ENCODE measurements at regions of chr17 and their contacts with region 1.

Region 1: GRCh38 chr17:48024937-48025906 is 12.4 kb downstream of the COPZ2 start:
- DNase-seq: peak; percentile 96
- ATAC-seq: peak; percentile 92
- H3K4me3 ChIP-seq: peak overlapping the region; percentile 43
- H3K27ac ChIP-seq: peak overlapping the region; percentile 14; the same call in 1 of the 2 replicates
- H3K4me1 ChIP-seq: peaks cover 18% of the 10 kb centered on the region
- H3K27me3 ChIP-seq: no peaks in the 10 kb centered on the region
- CTCF ChIP-seq: peak; percentile 93
- POLR2A ChIP-seq: no peak
- RAD21 ChIP-seq: peak; percentile 90

Region 2: GRCh38 chr17:47905221-47905781 is 119.9 kb before region 1 on chr17:
- CTCF ChIA-PET with region 1: no interaction called
- POLR2A ChIA-PET with region 1: no interaction called
- dilution Hi-C with region 1: no loop called
- in situ Hi-C with region 1: no loop called
- intact Hi-C with region 1: no loop called
- DNase-seq: peak; percentile 78
- ATAC-seq: peak; percentile 92
- H3K4me3 ChIP-seq: no peak overlapping the region
- H3K27ac ChIP-seq: peak overlapping the region; percentile 12; the same call in 1 of the 2 replicates
- H3K4me1 ChIP-seq: peaks cover 10% of the 10 kb centered on the region
- H3K27me3 ChIP-seq: no peaks in the 10 kb centered on the region
- CTCF ChIP-seq: no peak
- POLR2A ChIP-seq: no peak
- RAD21 ChIP-seq: no peak

Region 3: GRCh38 chr17:47957591-47958428 is 67.4 kb before region 1 on chr17 and contains the start of gene PRR15L:
- CTCF ChIA-PET with region 1: no interaction called
- POLR2A ChIA-PET with region 1: no interaction called
- dilution Hi-C with region 1: no loop called
- in situ Hi-C with region 1: no loop called
- intact Hi-C with region 1: no loop called
- DNase-seq: no peak
- ATAC-seq: peak; percentile 21; the same call in 1 of the 2 replicates
- H3K4me3 ChIP-seq: no peak within 1 kb of the TSS
- H3K27ac ChIP-seq: no peak within 1 kb of the TSS
- H3K4me1 ChIP-seq: peaks cover 5% of the 10 kb centered on the region; the same call in 1 of the 2 replicates
- H3K27me3 ChIP-seq: peaks cover 8% of the 10 kb centered on the region
- CTCF ChIP-seq: no peak
- POLR2A ChIP-seq: no peak
- RAD21 ChIP-seq: no peak
- total RNA-seq, gene PRR15L: not detected in 2 replicates

Region 4: DNA sequence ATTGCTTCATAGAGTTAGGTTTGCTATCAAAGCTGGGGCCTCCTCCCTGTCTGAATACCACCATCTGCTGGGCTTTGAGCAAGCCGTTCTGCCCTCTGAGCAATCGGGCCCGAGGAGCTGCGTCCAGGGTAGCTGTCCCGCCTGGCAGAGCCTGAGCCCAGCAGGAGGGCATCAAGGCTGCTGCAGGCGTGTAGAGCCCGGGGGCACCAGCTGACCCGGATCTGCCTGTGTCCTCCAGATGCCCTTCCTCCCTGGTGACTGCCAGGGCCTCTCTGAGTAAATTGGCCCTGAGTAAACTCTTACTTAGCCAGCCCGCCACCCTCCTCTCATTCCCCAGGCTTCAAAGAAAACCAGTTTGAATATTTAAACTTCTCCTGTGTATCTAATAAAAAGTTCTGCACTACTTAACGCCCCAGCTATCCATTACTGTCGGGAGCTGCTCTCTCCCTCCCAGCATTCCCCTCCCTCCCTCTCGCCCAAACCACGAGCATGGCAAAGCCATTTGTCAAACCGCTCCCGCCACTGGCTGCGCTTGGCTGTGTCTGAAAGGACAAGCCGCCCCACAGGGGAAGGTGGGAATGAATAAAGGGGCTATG is 37.9 kb before region 1 on chr17:
- CTCF ChIA-PET with region 1: no interaction called
- POLR2A ChIA-PET with region 1: no interaction called
- dilution Hi-C with region 1: no loop called
- in situ Hi-C with region 1: no loop called
- intact Hi-C with region 1: no loop called
- DNase-seq: no peak
- ATAC-seq: peak; percentile 47
- H3K4me3 ChIP-seq: no peak overlapping the region
- H3K27ac ChIP-seq: no peak overlapping the region
- H3K4me1 ChIP-seq: peaks cover 9% of the 10 kb centered on the region
- H3K27me3 ChIP-seq: no peaks in the 10 kb centered on the region
- CTCF ChIP-seq: no peak
- POLR2A ChIP-seq: no peak
- RAD21 ChIP-seq: no peak

Region 5: GRCh38 chr17:48037036-48037837 is 12.0 kb after region 1 on chr17 and contains the start of gene COPZ2:
- CTCF ChIA-PET with region 1: interaction called, 12 read pairs
- POLR2A ChIA-PET with region 1: no interaction called
- dilution Hi-C with region 1: no loop called
- in situ Hi-C with region 1: no loop called
- intact Hi-C with region 1: no loop called
- DNase-seq: peak; percentile 44
- ATAC-seq: peak; percentile 90
- H3K4me3 ChIP-seq: peak within 1 kb of the TSS; percentile 65
- H3K27ac ChIP-seq: peak within 1 kb of the TSS; percentile 66
- H3K4me1 ChIP-seq: peaks cover 10% of the 10 kb centered on the region
- H3K27me3 ChIP-seq: no peaks in the 10 kb centered on the region
- CTCF ChIP-seq: peak; percentile 58
- POLR2A ChIP-seq: no peak
- RAD21 ChIP-seq: peak; percentile 38
- total RNA-seq, gene COPZ2: 41.0 and 60.5 TPM in 2 replicates

Region 6: DNA sequence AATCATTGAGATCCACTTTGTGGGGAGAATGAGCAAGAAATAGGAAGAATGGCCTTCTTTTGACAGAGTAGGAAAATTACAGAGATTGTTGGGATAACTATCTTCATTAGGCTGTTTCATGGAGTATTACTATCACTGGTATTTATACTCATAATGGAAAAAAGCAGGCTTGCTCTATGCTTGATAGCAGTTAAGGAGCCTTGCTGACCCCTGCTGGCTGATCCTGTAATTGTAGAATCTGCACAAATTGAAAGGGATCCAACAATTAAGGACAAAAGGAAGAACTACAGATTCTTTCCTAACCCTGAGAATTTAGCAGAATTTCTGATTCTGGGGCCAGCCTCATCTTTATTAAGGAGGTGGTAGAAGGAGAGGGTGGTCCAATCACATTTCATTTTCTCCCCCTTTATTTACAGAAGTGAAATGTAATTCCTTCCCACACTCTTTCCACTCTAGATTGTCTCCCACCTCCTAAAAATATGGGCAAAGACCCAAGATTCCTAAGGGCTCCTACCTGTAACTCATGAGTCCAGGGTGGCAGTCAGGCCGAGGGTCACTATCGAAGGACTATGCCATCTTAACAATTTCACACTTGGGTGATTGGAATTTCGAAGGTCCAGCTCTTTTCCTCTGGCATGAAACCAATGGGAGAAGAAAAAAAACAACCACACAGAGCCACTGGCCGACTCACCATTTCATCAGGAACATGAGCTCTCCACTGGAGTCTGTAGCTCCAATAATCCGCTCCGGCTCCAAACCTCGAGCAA is 49.3 kb after region 1 on chr17:
- CTCF ChIA-PET with region 1: interaction called, 9 read pairs
- POLR2A ChIA-PET with region 1: interaction called, 7 read pairs
- dilution Hi-C with region 1: no loop called
- in situ Hi-C with region 1: loop called (anchors 5 kb)
- intact Hi-C with region 1: loop called (anchors 1 kb)
- DNase-seq: peak; percentile 82
- ATAC-seq: peak; percentile 95
- H3K4me3 ChIP-seq: no peak overlapping the region
- H3K27ac ChIP-seq: no peak overlapping the region
- H3K4me1 ChIP-seq: peaks cover 2% of the 10 kb centered on the region
- H3K27me3 ChIP-seq: no peaks in the 10 kb centered on the region
- CTCF ChIP-seq: peak; percentile 93
- POLR2A ChIP-seq: no peak
- RAD21 ChIP-seq: peak; percentile 91

Region 7: GRCh38 chr17:48131216-48131824 is 106.1 kb after region 1 on chr17:
- CTCF ChIA-PET with region 1: interaction called, 18 read pairs
- POLR2A ChIA-PET with region 1: no interaction called
- dilution Hi-C with region 1: no loop called
- in situ Hi-C with region 1: loop called (anchors 5 kb)
- intact Hi-C with region 1: loop called (anchors 1 kb)
- DNase-seq: peak; percentile 66
- ATAC-seq: peak; percentile 91
- H3K4me3 ChIP-seq: no peak overlapping the region
- H3K27ac ChIP-seq: no peak overlapping the region
- H3K4me1 ChIP-seq: no peaks in the 10 kb centered on the region
- H3K27me3 ChIP-seq: peaks cover 11% of the 10 kb centered on the region
- CTCF ChIP-seq: peak; percentile 86
- POLR2A ChIP-seq: no peak
- RAD21 ChIP-seq: peak; percentile 87

Region 8: GRCh38 chr17:48593840-48594537 is 568.8 kb after region 1 on chr17:
- CTCF ChIA-PET with region 1: no interaction called
- POLR2A ChIA-PET with region 1: no interaction called
- dilution Hi-C with region 1: no loop called
- in situ Hi-C with region 1: loop called (anchors 10 kb)
- intact Hi-C with region 1: no loop called
- DNase-seq: peak; percentile 99
- ATAC-seq: peak; percentile 48
- H3K4me3 ChIP-seq: peak overlapping the region; percentile 91
- H3K27ac ChIP-seq: peak overlapping the region; percentile 96
- H3K4me1 ChIP-seq: peaks cover 12% of the 10 kb centered on the region
- H3K27me3 ChIP-seq: no peaks in the 10 kb centered on the region
- CTCF ChIP-seq: peak; percentile 98
- POLR2A ChIP-seq: peak; percentile 67
- RAD21 ChIP-seq: peak; percentile 93